Right ventricle myocardium inferior (tissue), 1 donor: ENCODE measurements at regions of chr12 and their contacts with region 1.

Region 1: DNA sequence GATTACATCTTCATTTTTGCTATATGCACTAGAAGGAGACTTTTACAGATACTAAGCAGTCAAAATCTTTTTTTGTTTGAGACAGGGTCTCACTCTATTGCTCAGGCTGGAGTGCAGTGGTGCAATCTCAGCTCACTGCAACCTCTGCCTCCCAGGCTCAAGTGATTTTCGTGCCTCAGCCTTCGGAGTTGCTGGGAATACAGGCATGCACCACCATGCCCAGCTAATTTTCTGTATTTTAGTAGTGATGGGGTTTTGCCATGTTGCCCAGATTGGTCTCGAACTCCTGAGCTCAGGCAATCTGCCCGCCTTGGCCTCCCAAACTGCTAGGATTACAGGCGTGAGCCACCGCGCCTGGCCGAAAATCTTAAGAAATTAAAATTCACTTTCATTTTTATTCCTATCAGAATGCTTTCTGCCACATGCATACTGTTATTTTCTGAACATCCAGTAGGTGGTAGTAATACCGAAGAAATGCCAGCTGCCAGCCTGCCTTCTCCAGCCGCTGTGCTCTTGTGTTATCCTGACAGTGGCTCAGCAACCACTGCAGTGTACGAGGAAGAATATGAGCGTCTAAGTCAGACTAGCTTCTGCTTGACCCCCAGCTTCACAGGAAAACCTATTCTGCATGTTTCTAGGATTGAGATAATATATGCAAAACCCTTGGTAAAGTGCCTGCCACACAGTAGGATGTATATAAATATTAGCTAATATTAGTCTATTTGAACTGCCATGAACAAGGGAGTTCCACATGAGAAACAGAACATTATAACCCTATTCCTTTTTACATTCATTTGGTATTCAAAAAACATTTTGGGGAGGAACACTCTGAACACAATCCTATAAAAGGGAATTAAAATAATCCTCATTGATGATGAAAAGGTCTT is 54.2 kb downstream of the RPAP3 start:
- DNase-seq: peak; percentile 73
- ATAC-seq: peak; percentile 93

Region 2: GRCh38 chr12:47449797-47450196 is 201.8 kb before region 1 on chr12:
- intact Hi-C with region 1: no loop called
- DNase-seq: no peak
- ATAC-seq: no peak

Region 3: GRCh38 chr12:47610686-47611252 is 40.8 kb before region 1 on chr12:
- intact Hi-C with region 1: no loop called
- DNase-seq: no peak
- ATAC-seq: no peak

Region 4: GRCh38 chr12:47686645-47687240 is 35.1 kb after region 1 on chr12:
- intact Hi-C with region 1: loop called (anchors 5 kb)
- DNase-seq: no peak
- ATAC-seq: no peak

Region 5: DNA sequence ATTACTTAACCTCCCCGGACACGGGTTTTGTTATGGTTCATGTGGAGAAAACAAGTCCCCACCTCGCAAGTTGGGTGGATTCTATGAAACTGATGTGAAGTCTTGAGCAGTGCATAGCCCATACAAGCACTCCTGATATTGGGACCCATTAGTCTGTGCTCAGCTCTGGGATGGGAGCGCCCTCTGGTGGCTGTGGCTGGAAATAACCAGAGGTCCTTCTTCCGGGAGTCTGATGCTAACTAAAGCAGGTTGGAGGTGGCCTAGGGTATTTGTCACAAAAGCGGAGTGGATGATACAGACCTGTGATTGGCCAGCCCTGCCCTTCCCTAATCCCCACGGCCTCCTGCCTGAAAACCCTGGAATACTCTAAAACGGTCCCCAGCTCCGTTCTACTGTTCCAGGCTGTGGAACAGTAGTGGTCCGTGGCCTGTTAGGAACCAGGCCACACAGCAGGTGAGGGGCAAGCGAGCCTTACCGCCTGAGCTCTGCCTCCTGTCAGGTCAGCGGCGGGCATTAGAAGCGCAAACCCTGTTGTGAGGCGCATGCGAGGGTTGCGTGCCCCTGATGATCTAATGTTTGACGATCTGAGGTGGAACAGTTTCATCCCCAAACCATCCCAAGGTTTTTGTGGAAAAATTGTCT is 127.8 kb after region 1 on chr12:
- intact Hi-C with region 1: loop called (anchors 5 kb)
- DNase-seq: peak; percentile 92
- ATAC-seq: peak; percentile 80

Region 6: DNA sequence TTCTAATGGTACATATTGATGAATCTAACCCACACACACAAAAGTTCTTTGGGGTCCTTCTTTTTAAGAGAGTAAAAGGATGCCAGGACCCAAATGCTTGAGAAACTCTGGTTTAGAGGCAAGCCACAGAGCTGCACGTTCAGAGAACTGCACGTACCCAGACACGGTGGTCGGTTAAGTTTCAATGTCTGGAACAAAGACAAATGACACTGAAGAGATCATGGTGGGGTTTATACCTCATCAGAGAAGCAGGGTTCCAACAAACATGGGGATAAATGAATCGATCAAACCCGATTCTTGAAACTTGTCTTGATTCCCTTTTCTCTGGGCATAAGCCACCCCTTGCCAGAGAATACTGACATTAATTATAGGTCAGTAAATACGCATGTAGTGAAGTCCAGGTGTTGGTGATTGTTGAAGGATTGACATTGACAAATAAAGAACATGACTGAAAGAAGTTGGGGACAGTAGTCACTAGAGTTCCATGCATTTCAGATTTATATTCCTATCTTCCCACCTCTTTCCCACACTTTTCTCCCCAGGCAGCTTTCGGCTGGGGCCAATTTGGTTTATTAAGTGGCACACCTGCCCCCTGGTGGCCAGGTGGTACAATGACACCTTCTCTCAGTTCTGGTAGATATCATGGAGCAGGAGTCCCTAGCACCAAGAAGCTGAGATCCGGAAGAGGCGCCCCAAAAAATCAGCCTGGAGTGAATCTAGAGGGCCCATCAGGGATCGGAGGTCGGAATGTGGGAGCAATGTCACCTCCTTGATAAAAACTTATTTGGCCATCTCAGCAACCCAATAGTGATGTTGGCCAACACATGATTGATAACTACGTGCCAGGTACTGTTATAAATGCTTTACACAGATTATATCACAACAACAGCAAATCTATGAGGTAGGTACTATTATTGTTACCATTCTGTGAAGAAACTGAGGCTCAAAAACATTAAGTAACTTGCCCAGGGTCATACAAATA is 185.9 kb after region 1 on chr12:
- intact Hi-C with region 1: loop called (anchors 2 kb)
- DNase-seq: peak; percentile 83
- ATAC-seq: peak; percentile 76